ENCODE measurements at regions of chr6 and their contacts with region 1.

Region 1: GRCh38 chr6:110999634-111000270 is 17.9 kb downstream of the RPF2 start:
- DNase-seq: no peak
- H3K4me3 Mint-ChIP-seq: no peak overlapping the region
- H3K27ac Mint-ChIP-seq: peak overlapping the region; percentile 46
- H3K4me1 Mint-ChIP-seq: no peaks in the 10 kb centered on the region
- H3K27me3 Mint-ChIP-seq: no peaks in the 10 kb centered on the region

Region 2: GRCh38 chr6:110682460-110682853 is 317.3 kb before region 1 on chr6:
- CTCF ChIA-PET with region 1: interaction called, 10 read pairs
- DNase-seq: peak; percentile 75
- H3K4me3 Mint-ChIP-seq: no peak overlapping the region
- H3K27ac Mint-ChIP-seq: no peak overlapping the region
- H3K4me1 Mint-ChIP-seq: peaks cover 15% of the 10 kb centered on the region
- H3K27me3 Mint-ChIP-seq: no peaks in the 10 kb centered on the region

Region 3: DNA sequence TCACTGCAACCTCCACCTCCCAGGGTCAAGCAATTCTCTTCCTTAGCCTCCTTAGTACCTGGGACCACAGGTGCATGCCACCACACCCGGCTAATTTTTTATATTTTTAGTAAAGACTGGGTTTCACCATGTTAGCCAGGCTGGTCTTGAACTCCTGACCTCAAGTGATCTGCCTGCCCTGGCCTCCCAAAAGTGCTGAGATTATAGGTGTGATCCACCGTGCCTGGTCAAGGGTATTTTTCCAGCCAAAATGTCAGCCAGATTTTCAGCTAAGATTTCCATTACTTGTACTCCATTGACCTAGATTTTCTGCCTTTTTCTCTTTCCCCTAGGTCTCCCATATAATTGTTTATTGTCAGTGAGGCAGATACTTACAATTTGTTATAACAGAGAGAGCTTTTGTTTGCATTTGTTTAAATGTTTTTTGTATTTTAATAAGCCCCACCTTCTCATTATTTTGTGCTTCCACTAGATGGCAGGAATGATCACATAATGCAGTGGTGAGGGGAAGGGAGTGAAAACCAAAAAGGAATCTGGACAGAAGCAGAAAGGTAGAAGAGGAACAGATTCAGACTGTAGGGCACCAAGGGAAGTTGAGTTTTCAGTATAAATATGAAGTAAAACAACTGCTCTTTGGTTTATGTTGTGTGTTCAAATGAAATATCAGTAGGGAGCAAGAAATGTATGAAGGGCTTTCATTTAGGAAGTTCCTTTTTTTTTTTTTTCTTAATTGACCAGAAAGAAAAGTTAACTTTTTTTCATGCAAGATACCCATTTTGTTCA is 11.8 kb after region 1 on chr6:
- CTCF ChIA-PET with region 1: interaction called, 18 read pairs
- DNase-seq: no peak
- H3K4me3 Mint-ChIP-seq: no peak overlapping the region
- H3K27ac Mint-ChIP-seq: no peak overlapping the region
- H3K4me1 Mint-ChIP-seq: peaks cover 4% of the 10 kb centered on the region
- H3K27me3 Mint-ChIP-seq: no peaks in the 10 kb centered on the region

Region 4: GRCh38 chr6:111534231-111534751 is 534.5 kb after region 1 on chr6:
- CTCF ChIA-PET with region 1: no interaction called
- DNase-seq: no peak
- H3K4me3 Mint-ChIP-seq: no peak overlapping the region
- H3K27ac Mint-ChIP-seq: no peak overlapping the region
- H3K4me1 Mint-ChIP-seq: peaks cover 29% of the 10 kb centered on the region
- H3K27me3 Mint-ChIP-seq: no peaks in the 10 kb centered on the region

Measured in activated naive CD4-positive, alpha-beta T cell treated with anti-CD3 and anti-CD28 coated beads, Interleukin-2, amount 10 ng/mL, durations not matched to agents 7 days and 5 days (primary cell).